Caco-2 (cell line): ENCODE measurements at regions of chr16 and their contacts with region 1.

Region 1: GRCh38 chr16:30534368-30535105 is at the start of gene ZNF747:
- DNase-seq: peak; percentile 89 to 93
- H3K4me3 ChIP-seq: peak within 1 kb of the TSS; percentile 80
- H3K4me3 Mint-ChIP-seq: peak within 1 kb of the TSS; percentile 87
- H3K27ac Mint-ChIP-seq: peak within 1 kb of the TSS; percentile 91
- H3K4me1 ChIP-seq: no peaks in the 10 kb centered on the region; the same call in 1 of the 2 replicates
- H3K4me1 Mint-ChIP-seq: no peaks in the 10 kb centered on the region
- H3K27me3 ChIP-seq: no peaks in the 10 kb centered on the region
- H3K27me3 Mint-ChIP-seq: no peaks in the 10 kb centered on the region
- CTCF ChIP-seq: no peak
- total RNA-seq, gene ZNF747: 6.9 and 8.1 TPM in 2 replicates

Region 2: DNA sequence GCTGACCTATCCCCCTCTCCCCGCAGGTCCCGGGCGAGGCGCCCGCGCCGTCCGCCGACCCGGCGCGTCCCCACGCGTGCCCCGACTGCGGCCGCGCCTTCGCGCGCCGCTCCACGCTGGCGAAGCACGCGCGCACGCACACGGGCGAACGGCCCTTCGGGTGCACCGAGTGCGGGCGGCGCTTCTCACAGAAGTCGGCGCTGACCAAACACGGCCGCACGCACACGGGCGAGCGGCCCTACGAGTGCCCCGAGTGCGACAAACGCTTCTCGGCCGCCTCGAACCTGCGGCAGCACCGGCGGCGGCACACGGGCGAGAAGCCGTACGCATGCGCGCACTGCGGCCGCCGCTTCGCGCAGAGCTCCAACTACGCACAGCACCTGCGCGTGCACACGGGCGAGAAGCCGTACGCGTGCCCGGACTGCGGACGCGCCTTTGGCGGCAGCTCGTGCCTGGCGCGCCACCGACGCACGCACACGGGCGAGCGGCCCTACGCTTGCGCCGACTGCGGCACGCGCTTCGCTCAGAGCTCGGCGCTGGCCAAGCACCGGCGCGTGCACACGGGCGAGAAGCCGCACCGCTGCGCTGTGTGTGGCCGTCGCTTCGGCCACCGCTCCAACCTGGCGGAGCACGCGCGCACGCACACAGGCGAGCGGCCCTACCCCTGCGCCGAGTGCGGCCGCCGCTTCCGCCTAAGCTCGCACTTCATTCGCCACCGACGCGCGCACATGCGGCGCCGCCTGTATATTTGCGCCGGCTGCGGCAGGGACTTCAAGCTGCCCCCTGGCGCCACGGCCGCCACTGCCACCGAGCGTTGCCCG is 116.8 kb before region 1 on chr16:
- CTCF ChIA-PET with region 1: interaction called, 13 read pairs
- POLR2A ChIA-PET with region 1: interaction called, 11 read pairs
- intact Hi-C with region 1: no loop called
- DNase-seq: peak; percentile 89 to 91
- H3K4me3 ChIP-seq: peak overlapping the region; percentile 93
- H3K4me3 Mint-ChIP-seq: peak overlapping the region; percentile 60
- H3K27ac Mint-ChIP-seq: no peak overlapping the region
- H3K4me1 ChIP-seq: peaks cover 11% of the 10 kb centered on the region; the same call in 1 of the 2 replicates
- H3K4me1 Mint-ChIP-seq: peaks cover 16% of the 10 kb centered on the region
- H3K27me3 ChIP-seq: no peaks in the 10 kb centered on the region
- H3K27me3 Mint-ChIP-seq: no peaks in the 10 kb centered on the region
- CTCF ChIP-seq: peak in 1 of 2 experiments; percentile 41

Region 3: GRCh38 chr16:30557957-30558788 is 23.6 kb after region 1 on chr16 and contains the start of gene ZNF764:
- CTCF ChIA-PET with region 1: interaction called, 32 read pairs
- POLR2A ChIA-PET with region 1: interaction called, 20 read pairs
- intact Hi-C with region 1: loop called (anchors 2 kb)
- DNase-seq: peak; percentile 96 to 97
- H3K4me3 ChIP-seq: peak within 1 kb of the TSS; percentile 72
- H3K4me3 Mint-ChIP-seq: peak within 1 kb of the TSS; percentile 78
- H3K27ac Mint-ChIP-seq: peak within 1 kb of the TSS; percentile 53
- H3K4me1 ChIP-seq: peaks cover 5% of the 10 kb centered on the region; the same call in 1 of the 2 replicates
- H3K4me1 Mint-ChIP-seq: peaks cover 6% of the 10 kb centered on the region
- H3K27me3 ChIP-seq: no peaks in the 10 kb centered on the region
- H3K27me3 Mint-ChIP-seq: no peaks in the 10 kb centered on the region
- CTCF ChIP-seq: no peak
- total RNA-seq, gene ZNF764: 8.5 and 10.9 TPM in 2 replicates

Region 4: DNA sequence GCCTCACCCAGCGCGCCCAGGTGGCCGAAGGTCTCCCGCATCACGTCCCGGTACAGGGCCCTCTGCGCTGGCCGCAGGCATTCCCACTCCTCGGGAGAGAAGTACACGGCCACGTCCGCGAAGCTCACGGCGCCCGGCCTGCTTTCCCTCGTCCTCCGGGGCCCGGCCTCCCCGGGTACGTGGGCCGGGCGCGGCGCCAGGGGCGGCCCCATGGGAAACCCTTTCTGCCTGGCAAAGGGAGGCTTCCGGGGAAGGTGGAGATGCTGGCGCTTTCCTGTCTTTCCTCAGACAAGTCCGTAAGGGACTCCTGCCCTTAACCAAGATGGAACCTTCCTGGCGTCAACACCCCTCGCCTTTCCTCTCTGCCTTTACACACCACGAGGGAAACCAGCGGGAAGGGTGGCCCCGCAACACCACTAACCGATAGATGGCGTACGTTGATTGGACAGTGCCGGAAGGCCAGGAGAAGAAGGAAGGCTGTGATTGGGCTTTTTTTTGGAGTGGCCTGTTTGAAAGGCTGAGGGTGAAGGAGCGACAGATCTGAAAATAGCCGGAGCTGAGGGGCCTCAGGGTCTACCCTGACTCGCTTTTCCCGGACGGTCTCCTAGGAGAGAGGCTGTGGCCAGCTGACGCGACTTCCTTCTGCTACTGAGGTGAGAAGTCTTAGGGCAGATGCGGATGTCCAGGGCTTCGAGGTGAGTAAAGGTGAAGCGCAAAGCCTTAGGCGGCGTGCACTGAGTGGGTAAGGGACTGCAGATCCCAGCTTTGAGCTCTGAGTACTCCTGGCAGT is 51.1 kb after region 1 on chr16 and contains the start of gene ZNF785:
- CTCF ChIA-PET with region 1: interaction called, 4 read pairs
- POLR2A ChIA-PET with region 1: interaction called, 10 read pairs
- intact Hi-C with region 1: no loop called
- DNase-seq: peak; percentile 96 to 98
- H3K4me3 ChIP-seq: peak within 1 kb of the TSS; percentile 69
- H3K4me3 Mint-ChIP-seq: peak within 1 kb of the TSS; percentile 91
- H3K27ac Mint-ChIP-seq: peak within 1 kb of the TSS; percentile 91
- H3K4me1 ChIP-seq: no peaks in the 10 kb centered on the region
- H3K4me1 Mint-ChIP-seq: no peaks in the 10 kb centered on the region
- H3K27me3 ChIP-seq: no peaks in the 10 kb centered on the region
- H3K27me3 Mint-ChIP-seq: no peaks in the 10 kb centered on the region
- CTCF ChIP-seq: peak in 1 of 2 experiments; percentile 7
- total RNA-seq, gene ZNF785: 13.5 and 13.6 TPM in 2 replicates

Region 5: GRCh38 chr16:30650369-30651123 is 116.0 kb after region 1 on chr16 and contains the start of gene PRR14:
- CTCF ChIA-PET with region 1: interaction called, 4 read pairs
- POLR2A ChIA-PET with region 1: interaction called, 18 read pairs
- intact Hi-C with region 1: loop called (anchors 10 kb)
- DNase-seq: peak; percentile 98 to 99
- H3K4me3 ChIP-seq: peak within 1 kb of the TSS; percentile 80
- H3K4me3 Mint-ChIP-seq: peak within 1 kb of the TSS; percentile 86
- H3K27ac Mint-ChIP-seq: peak within 1 kb of the TSS; percentile 78
- H3K4me1 ChIP-seq: peaks cover 3% of the 10 kb centered on the region; the same call in 1 of the 2 replicates
- H3K4me1 Mint-ChIP-seq: peaks cover 12% of the 10 kb centered on the region
- H3K27me3 ChIP-seq: no peaks in the 10 kb centered on the region
- H3K27me3 Mint-ChIP-seq: no peaks in the 10 kb centered on the region
- CTCF ChIP-seq: peak; percentile 1 to 36
- total RNA-seq, gene PRR14: 26.3 and 28.2 TPM in 2 replicates

Region 6: GRCh38 chr16:30669896-30670797 is 135.6 kb after region 1 on chr16:
- CTCF ChIA-PET with region 1: no interaction called
- POLR2A ChIA-PET with region 1: no interaction called
- intact Hi-C with region 1: no loop called
- DNase-seq: no peak
- H3K4me3 ChIP-seq: no peak overlapping the region
- H3K4me3 Mint-ChIP-seq: no peak overlapping the region
- H3K27ac Mint-ChIP-seq: no peak overlapping the region
- H3K4me1 ChIP-seq: no peaks in the 10 kb centered on the region
- H3K4me1 Mint-ChIP-seq: no peaks in the 10 kb centered on the region
- H3K27me3 ChIP-seq: no peaks in the 10 kb centered on the region
- H3K27me3 Mint-ChIP-seq: no peaks in the 10 kb centered on the region
- CTCF ChIP-seq: no peak